Aorta (tissue), 5 donors: ENCODE measurements at regions of chr12 and their contacts with region 1.

Region 1: DNA sequence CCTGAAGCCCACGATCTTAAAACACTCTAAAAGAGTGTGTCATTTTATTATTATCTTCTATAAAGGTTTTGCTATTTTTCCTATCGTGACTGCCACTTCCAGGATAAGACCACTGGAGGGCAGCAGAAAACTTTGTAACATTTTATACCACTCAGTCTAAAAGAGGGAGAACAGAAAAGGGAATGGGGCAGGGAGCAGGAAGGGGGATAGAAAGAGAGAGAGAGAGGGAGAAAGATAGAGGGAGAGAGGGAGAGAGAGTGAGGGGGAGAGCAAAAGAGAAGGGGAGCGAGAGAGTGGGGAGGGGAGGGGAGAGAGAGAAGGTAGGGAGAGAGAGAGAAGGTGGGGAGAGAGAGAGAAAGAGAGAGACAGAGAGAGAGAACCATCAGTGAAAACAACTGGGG is 2.0 kb upstream of the ART4 start:
- DNase-seq: no peak
- ATAC-seq: peak; percentile 82
- H3K4me3 ChIP-seq: no peak overlapping the region
- H3K27ac ChIP-seq: no peak overlapping the region
- H3K4me1 ChIP-seq: peaks cover 3 to 7% of the 10 kb centered on the region in 2 donors
- H3K27me3 ChIP-seq: no peaks in the 10 kb centered on the region

Region 2: GRCh38 chr12:14769969-14770495 is 75.3 kb before region 1 on chr12:
- intact Hi-C with region 1: loop called in 1 of 2 experiments (anchors 5 kb)
- DNase-seq: peak; percentile 89 to 94
- ATAC-seq: peak; percentile 81
- H3K4me3 ChIP-seq: peak overlapping the region; percentile 71 to 94
- H3K27ac ChIP-seq: peak overlapping the region; percentile 92 to 98
- H3K4me1 ChIP-seq: no peaks in the 10 kb centered on the region
- H3K27me3 ChIP-seq: no peaks in the 10 kb centered on the region

Region 3: DNA sequence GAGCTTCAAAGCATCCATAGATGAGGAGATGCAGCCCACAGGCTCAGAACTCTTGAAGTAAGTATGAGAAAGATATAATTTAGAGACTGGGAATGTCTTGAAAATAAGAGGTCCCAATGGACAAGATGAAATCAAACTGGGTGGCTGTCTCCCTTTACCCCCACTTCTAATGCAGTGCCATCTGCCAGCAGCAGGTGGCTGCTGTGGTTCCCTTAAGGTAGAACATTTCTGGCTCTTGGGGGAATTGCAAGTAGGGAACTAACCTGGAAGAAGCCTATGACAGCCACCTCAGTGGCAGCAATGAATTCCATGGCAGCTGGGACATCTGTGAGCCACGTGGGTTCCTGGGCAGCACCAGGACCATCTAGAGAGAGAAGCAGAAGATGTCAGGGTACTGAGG is 92.3 kb after region 1 on chr12:
- intact Hi-C with region 1: no loop called
- DNase-seq: no peak
- ATAC-seq: no peak
- H3K4me3 ChIP-seq: no peak overlapping the region
- H3K27ac ChIP-seq: no peak overlapping the region
- H3K4me1 ChIP-seq: no peaks in the 10 kb centered on the region
- H3K27me3 ChIP-seq: no peaks in the 10 kb centered on the region

Region 4: GRCh38 chr12:14995583-14996425 is 150.5 kb after region 1 on chr12:
- intact Hi-C with region 1: loop called (anchors 2 kb)
- DNase-seq: no peak
- ATAC-seq: peak; percentile 82
- H3K4me3 ChIP-seq: no peak overlapping the region
- H3K27ac ChIP-seq: no peak overlapping the region
- H3K4me1 ChIP-seq: no peaks in the 10 kb centered on the region
- H3K27me3 ChIP-seq: no peaks in the 10 kb centered on the region

Region 5: DNA sequence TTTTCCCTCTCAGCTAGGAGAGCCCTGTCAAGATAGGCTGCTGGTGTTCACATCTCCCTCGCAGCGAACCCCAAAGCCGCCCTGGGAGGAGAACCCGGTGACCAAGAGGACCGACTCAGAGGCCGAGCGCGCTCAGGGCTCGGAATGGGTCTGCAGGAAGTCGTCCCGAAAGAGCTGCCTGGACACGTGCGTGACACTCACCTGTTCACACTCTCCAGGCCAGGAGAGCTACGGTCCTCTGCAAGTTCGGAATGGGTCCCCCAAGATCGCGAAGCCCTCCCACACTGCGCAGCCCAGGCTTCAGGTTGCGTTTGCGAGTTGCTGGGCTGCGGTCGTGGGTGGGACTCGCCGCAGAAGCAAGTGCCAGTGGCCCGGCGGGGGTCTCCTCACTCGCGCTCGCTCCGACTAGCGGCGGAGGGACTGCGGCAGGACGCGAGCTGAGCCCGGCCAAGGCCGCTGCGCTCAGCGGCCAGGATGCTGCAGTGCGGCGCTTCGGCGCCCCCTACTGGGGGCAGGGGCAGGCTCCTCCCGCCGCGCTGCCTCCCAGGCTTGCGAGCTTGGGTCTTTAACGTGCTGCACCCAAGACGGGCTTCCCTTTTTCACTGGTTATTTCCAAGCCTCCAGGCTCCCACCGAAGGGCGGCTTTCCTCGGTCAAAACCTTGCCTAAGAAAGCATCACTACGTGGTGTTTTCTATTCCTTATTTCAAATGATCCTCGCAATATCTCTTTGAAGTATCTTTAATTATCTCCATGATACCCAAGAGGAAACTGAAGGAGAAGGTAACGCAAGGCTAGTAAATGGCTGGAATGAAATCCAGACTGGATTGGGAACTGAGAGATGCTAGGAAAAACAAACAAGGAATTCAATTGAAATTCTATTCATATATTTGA is 375.9 kb after region 1 on chr12 and contains the start of gene RERG:
- intact Hi-C with region 1: loop called (anchors 5 to 10 kb)
- DNase-seq: peak; percentile 89 to 95
- ATAC-seq: peak; percentile 98
- H3K4me3 ChIP-seq: peak within 1 kb of the TSS; percentile 51 to 57
- H3K27ac ChIP-seq: peak within 1 kb of the TSS; percentile 59 to 87
- H3K4me1 ChIP-seq: peaks cover 0 to 6% of the 10 kb centered on the region in 2 donors
- H3K27me3 ChIP-seq: no peaks in the 10 kb centered on the region
- total RNA-seq, gene RERG: 70.5 to 77.3 TPM

Region 6: DNA sequence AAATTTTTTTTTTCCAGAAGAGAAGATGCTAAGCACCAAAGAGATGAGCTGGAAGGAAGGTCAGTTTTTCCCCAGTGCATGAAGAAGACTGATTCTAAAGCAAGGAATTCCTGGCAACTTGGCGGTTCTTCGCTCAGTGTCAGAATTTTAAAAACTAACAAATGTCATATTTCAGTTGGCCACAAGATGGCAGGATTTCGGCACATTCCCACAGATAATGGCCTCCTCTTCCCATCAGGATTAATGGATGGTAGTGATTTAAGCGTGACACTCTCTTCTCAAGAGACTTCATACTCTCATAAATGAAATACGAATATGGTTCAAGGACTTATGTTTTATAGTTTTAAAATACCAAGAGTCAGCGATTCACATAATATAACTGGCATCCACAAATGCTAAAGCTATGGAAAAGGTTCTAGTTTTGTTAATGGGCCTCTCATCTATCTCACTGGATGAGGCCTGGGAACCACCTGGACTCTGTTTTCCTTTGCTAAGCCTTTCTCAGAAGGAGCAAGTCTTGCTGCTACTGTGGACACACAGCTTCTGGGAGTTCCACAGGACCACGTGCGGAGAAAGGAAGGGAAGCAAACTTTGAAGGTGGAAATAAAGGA is 430.8 kb after region 1 on chr12:
- intact Hi-C with region 1: loop called in 1 of 2 experiments (anchors 5 kb)
- DNase-seq: no peak
- ATAC-seq: peak; percentile 58
- H3K4me3 ChIP-seq: no peak overlapping the region
- H3K27ac ChIP-seq: peak overlapping the region in 1 of 2 donors; percentile 33
- H3K4me1 ChIP-seq: peaks cover 3% of the 10 kb centered on the region in 2 donors
- H3K27me3 ChIP-seq: no peaks in the 10 kb centered on the region